ENCODE measurements at regions of chr14 and their contacts with region 1.

Region 1: GRCh38 chr14:25588751-25589150 is 538.8 kb upstream of the STXBP6 start:
- DNase-seq: no peak
- H3K4me3 ChIP-seq: no peak overlapping the region
- H3K27ac ChIP-seq: no peak overlapping the region
- H3K4me1 ChIP-seq: no peaks in the 10 kb centered on the region
- H3K27me3 ChIP-seq: no peaks in the 10 kb centered on the region
- CTCF ChIP-seq: no peak

Region 2: DNA sequence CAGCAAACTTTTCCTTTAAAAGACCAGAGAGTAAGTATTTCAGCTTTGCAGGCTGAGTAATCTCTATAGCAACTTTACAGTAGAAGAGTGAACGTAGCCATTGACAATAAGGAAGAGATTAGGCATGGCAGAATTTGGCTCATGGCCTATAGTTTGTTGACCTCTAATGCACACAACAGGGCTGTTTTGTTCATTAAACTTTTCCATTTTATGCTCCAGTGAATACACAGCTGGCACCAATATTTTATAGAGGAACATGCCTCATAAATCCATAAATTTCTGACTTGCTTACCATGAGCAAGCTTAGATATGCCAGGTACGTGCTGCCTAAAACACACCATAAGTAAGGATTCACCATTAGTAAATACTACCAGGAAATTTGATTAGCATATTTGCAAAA is 70.2 kb after region 1 on chr14:
- CTCF ChIA-PET with region 1: no interaction called
- dilution Hi-C with region 1: loop called (anchors 5 kb)
- in situ Hi-C with region 1: no loop called
- intact Hi-C with region 1: no loop called
- DNase-seq: no peak
- H3K4me3 ChIP-seq: no peak overlapping the region
- H3K27ac ChIP-seq: no peak overlapping the region
- H3K4me1 ChIP-seq: no peaks in the 10 kb centered on the region
- H3K27me3 ChIP-seq: no peaks in the 10 kb centered on the region
- CTCF ChIP-seq: no peak